Activated CD4-positive, alpha-beta memory T cell treated with anti-CD3 and anti-CD28 coated beads, Interleukin-2, amount 10 ng/mL, durations not matched to agents 7 days and 5 days (primary cell): ENCODE measurements at regions of chr1 and their contacts with region 1.

Region 1: DNA sequence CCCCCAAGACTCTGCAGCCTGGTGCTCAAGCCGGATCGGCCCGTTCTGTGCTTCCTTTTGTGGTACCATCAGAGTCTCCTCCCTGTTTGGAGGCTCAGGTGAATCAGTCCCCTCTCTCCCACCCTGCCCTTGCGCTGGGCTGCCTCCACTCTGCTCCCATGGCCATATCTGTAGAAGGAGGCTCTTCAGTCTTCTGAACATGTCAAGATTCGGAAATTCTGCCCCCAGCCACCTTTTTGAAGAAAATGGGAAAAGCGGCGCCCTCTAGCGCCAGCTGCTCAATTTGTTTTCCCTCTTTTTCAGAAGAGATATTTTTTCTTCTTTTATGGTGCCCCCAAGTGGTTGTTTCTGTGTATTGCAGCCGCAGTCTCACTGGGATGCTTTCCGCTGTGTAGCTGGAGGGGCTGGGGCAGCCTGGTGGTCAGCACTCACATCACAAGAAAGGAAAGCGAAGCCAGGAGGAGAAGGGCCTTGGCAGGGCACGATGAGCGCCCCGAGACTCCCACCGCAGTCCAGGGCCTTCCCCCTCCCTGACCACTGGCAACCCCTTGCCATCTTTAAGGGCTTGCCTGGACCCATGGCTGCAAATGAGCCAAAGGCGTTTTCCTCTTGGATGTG is 58.4 kb upstream of the CACNA1E start:
- DNase-seq: peak; percentile 80
- H3K4me3 Mint-ChIP-seq: no peak overlapping the region
- H3K27ac Mint-ChIP-seq: no peak overlapping the region
- H3K4me1 Mint-ChIP-seq: peaks cover 4% of the 10 kb centered on the region
- H3K27me3 Mint-ChIP-seq: peaks cover 9% of the 10 kb centered on the region

Region 2: DNA sequence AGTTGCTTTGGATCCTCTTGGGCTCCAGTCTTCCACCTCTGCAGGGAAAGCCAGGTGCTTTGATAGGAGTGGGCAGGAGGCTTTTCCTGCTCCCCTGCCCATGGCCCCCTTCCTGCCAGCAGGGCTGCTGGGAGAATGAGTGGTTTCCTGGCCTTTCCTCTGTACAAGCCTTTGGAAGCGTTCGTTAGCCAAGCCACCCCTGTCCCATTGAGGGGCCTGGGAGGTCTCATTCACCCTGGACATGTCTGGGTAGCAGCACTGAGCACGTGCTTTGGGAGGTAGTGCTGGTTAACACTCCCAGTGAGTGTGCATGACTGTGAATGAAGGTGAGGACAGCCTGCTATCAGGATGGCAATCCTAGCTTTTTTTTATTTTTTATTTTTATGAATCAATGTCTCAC is 60.1 kb before region 1 on chr1:
- CTCF ChIA-PET with region 1: no interaction called
- POLR2A ChIA-PET with region 1: no interaction called
- DNase-seq: no peak
- H3K4me3 Mint-ChIP-seq: no peak overlapping the region
- H3K27ac Mint-ChIP-seq: no peak overlapping the region
- H3K4me1 Mint-ChIP-seq: no peaks in the 10 kb centered on the region
- H3K27me3 Mint-ChIP-seq: no peaks in the 10 kb centered on the region

Region 3: DNA sequence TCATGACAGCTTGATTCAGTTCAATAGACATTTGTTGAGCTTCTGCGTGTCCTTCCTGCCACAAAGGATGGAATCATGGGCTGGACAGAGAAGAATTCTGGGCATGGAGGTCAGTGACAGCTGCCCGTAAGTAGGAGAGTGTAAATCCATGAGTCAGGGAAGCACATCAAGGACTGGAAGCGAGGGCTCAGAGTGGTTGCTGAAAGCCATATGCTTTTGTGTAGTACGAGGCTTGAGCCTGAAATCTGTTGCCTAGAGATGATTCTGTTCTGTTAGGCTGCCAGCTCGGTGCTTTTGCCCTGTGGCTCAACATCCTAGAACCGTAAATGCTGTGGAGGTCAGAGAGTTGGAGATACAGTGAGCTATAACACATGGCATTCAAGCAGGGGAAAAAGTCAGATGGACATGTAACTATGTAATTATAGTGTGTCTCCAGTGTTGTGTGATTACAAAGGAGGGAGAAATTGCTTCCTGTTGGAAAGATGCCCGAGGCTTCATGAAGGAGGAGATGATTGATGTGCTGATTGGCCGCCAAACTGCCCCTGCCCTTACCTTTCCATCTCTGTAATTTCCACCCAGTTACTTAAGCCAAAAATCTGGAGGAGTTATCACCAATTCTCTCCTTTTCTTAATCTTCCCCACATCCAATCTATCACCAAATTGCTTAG is 34.4 kb before region 1 on chr1:
- CTCF ChIA-PET with region 1: interaction called, 11 read pairs
- POLR2A ChIA-PET with region 1: no interaction called
- DNase-seq: no peak
- H3K4me3 Mint-ChIP-seq: no peak overlapping the region
- H3K27ac Mint-ChIP-seq: no peak overlapping the region
- H3K4me1 Mint-ChIP-seq: peaks cover 14% of the 10 kb centered on the region
- H3K27me3 Mint-ChIP-seq: peaks cover 2% of the 10 kb centered on the region

Region 4: DNA sequence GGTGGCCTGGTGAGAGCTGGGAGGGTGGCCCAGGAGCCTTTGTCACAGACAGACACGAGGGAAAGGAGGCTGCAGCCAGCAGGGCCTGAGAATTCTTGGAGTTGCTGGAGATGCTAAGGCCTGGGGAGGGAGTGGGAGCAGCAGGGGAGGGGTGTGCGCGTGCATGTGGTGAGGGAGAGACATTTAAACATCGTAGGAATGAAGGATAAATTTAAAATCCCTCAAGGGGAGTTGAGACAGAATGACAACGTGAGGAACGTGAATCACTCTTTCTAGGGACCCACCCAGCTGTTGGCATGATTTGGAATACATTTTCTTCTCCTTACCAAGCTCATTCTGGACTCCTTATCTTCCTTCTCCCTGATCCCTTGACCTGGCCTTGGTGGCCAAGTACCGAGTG is 14.9 kb before region 1 on chr1:
- CTCF ChIA-PET with region 1: no interaction called
- POLR2A ChIA-PET with region 1: no interaction called
- DNase-seq: no peak
- H3K4me3 Mint-ChIP-seq: no peak overlapping the region
- H3K27ac Mint-ChIP-seq: no peak overlapping the region
- H3K4me1 Mint-ChIP-seq: peaks cover 1% of the 10 kb centered on the region
- H3K27me3 Mint-ChIP-seq: peaks cover 3% of the 10 kb centered on the region

Region 5: DNA sequence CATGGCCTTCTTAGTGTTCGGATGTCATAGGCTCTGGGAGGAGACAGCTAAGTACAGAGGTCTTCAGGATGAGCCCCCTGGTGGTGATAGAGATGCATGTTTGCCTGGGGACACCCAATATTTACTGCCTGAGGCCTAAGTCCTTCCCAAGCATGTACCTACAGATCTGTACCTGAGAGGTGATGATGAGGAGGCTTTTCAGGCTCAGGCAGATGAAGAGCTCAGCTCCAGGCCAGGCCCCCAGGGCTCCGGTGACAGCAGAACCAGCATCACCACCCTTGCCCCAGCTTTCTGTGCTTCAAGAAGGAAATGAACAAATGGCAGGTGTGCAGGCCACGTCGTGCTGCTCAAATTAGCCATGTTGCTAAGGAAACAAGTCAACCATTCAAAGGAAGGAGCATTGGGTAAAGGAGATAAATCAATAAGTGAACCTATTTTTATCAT is 79.5 kb after region 1 on chr1:
- CTCF ChIA-PET with region 1: no interaction called
- POLR2A ChIA-PET with region 1: no interaction called
- DNase-seq: no peak
- H3K4me3 Mint-ChIP-seq: no peak overlapping the region
- H3K27ac Mint-ChIP-seq: no peak overlapping the region
- H3K4me1 Mint-ChIP-seq: peaks cover 8% of the 10 kb centered on the region
- H3K27me3 Mint-ChIP-seq: peaks cover 21% of the 10 kb centered on the region

Region 6: DNA sequence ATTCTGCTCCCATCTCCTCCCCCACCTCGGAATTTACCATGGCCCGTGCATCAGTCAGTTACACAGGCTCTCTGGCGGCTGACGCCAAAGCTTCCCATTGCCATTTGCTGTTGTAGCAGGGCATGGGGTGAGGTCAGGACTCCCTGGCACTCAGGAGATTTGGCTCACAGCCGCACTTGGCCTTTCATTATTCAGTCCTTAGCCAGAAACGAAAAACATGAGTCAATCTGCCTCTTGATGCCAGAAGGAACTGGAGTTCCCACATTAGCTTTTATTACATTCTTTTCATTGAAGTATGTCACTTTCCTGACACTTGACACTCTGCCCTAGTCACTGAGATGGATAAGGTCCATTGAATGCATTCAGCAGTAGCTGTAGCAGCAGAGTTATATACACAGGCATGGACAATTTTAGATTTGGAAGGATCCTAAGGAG is 319.0 kb after region 1 on chr1:
- CTCF ChIA-PET with region 1: no interaction called
- POLR2A ChIA-PET with region 1: no interaction called
- DNase-seq: no peak
- H3K4me3 Mint-ChIP-seq: no peak overlapping the region
- H3K27ac Mint-ChIP-seq: no peak overlapping the region
- H3K4me1 Mint-ChIP-seq: no peaks in the 10 kb centered on the region
- H3K27me3 Mint-ChIP-seq: peaks cover 5% of the 10 kb centered on the region